ENCODE measurements at regions of chr13 and their contacts with region 1.

Region 1: GRCh38 chr13:31161828-31162590 is at the start of gene HSPH1:
- DNase-seq: peak; percentile 95
- CTCF ChIP-seq: peak; percentile 31

Region 2: GRCh38 chr13:31150315-31150985 is 11.6 kb before region 1 on chr13:
- CTCF ChIA-PET with region 1: interaction called, 9 read pairs
- POLR2A ChIA-PET with region 1: interaction called, 10 read pairs
- DNase-seq: no peak
- CTCF ChIP-seq: no peak